Activated CD8-positive, alpha-beta T cell treated with anti-CD3 and anti-CD28 coated beads, Interleukin-2, amount 10 ng/mL, durations not matched to agents 7 days and 5 days (primary cell): ENCODE measurements at regions of chr14 and their contacts with region 1.

Region 1: DNA sequence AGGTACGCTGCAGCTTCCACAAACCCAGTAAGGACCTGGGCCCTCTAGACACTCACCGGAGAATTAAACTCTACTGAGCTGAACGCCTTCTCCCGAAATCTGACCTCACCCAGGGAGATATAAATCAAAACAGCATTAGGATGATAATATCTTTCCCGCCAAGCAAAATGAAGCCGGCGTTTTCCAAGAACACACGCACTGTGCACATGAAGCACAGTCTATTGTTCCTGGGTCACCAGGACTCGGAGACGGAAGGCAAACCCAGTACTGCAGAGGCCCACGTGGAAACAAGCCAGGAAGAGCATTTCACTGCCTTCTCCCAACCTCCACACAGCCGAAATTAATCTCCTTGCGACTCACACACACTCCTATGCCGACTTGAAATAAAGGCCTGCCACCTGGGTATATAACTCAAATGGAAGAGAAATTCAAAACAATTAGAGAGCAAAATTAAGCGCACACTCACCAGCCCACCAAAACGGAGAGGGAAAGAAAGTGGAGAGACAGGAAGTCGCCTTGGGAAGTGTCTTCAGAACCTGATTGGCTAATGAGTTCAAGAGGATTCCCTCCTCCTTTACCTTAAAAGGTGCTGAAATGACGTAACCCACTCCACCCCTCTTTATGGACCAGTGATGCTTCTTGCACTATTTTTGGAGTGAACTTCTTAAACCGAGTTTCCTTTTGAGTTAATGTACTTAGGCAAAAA is at the start of gene CCNB1IP1:
- DNase-seq: peak; percentile 72
- ATAC-seq: peak; percentile 99
- H3K4me3 Mint-ChIP-seq: peak within 1 kb of the TSS; percentile 99
- H3K27ac Mint-ChIP-seq: peak within 1 kb of the TSS; percentile 93
- H3K4me1 Mint-ChIP-seq: peaks cover 51% of the 10 kb centered on the region
- H3K27me3 Mint-ChIP-seq: peaks cover 4% of the 10 kb centered on the region
- total RNA-seq, gene CCNB1IP1: 35.3 to 38.3 TPM

Region 2: GRCh38 chr14:20195911-20196310 is 137.0 kb before region 1 on chr14:
- CTCF ChIA-PET with region 1: no interaction called
- POLR2A ChIA-PET with region 1: no interaction called
- DNase-seq: no peak
- ATAC-seq: no peak
- H3K4me3 Mint-ChIP-seq: no peak overlapping the region
- H3K27ac Mint-ChIP-seq: no peak overlapping the region
- H3K4me1 Mint-ChIP-seq: no peaks in the 10 kb centered on the region
- H3K27me3 Mint-ChIP-seq: peaks cover 3% of the 10 kb centered on the region

Region 3: GRCh38 chr14:20305265-20306078 is 27.5 kb before region 1 on chr14 and contains the start of gene TTC5:
- CTCF ChIA-PET with region 1: interaction called, 12 read pairs
- POLR2A ChIA-PET with region 1: no interaction called
- DNase-seq: peak; percentile 93
- ATAC-seq: peak; percentile 98
- H3K4me3 Mint-ChIP-seq: peak within 1 kb of the TSS; percentile 81
- H3K27ac Mint-ChIP-seq: peak within 1 kb of the TSS; percentile 67
- H3K4me1 Mint-ChIP-seq: peaks cover 24% of the 10 kb centered on the region
- H3K27me3 Mint-ChIP-seq: no peaks in the 10 kb centered on the region
- total RNA-seq, gene TTC5: 21.8 to 22.0 TPM

Region 4: DNA sequence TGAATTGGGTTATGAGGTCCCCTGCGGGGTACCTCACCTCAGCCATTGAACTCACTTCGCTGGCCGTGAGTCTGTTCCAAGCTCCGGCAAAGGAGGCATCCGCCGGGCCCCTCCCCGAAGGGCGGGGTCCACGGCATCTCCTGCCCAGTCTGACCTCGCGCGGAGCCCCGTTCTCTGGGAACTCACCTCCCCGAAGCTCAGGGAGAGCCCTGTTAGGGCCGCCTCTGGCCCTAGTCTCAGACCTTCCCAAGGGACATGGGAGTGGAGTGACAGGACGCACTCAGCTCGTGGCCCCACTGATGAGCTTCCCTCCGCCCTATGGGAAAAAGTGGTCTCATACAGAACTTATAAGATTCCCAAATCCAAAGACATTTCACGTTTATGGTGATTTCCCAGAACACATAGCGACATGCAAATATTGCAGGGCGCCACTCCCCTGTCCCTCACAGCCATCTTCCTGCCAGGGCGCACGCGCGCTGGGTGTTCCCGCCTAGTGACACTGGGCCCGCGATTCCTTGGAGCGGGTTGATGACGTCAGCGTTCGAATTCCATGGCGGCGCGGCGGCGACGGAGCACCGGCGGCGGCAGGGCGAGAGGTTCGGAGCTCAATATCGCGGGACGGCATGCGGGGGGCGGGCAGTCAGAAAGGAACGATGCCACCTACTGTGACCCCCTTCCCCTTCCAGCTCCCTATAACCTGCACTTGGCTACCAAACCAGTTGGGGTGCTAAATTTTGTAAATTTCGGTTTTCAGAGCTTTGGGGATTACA is 10.3 kb after region 1 on chr14 and contains the start of gene PARP2:
- CTCF ChIA-PET with region 1: interaction called, 120 read pairs
- POLR2A ChIA-PET with region 1: interaction called, 77 read pairs
- DNase-seq: peak; percentile 95
- ATAC-seq: peak; percentile 94
- H3K4me3 Mint-ChIP-seq: peak within 1 kb of the TSS; percentile 93
- H3K27ac Mint-ChIP-seq: peak within 1 kb of the TSS; percentile 98
- H3K4me1 Mint-ChIP-seq: peaks cover 20% of the 10 kb centered on the region
- H3K27me3 Mint-ChIP-seq: peaks cover 5% of the 10 kb centered on the region
- total RNA-seq, gene PARP2: 29.7 to 32.3 TPM

Region 5: GRCh38 chr14:20512177-20512905 is 179.4 kb after region 1 on chr14:
- CTCF ChIA-PET with region 1: no interaction called
- POLR2A ChIA-PET with region 1: no interaction called
- DNase-seq: no peak
- ATAC-seq: no peak
- H3K4me3 Mint-ChIP-seq: no peak overlapping the region
- H3K27ac Mint-ChIP-seq: no peak overlapping the region
- H3K4me1 Mint-ChIP-seq: no peaks in the 10 kb centered on the region
- H3K27me3 Mint-ChIP-seq: peaks cover 19% of the 10 kb centered on the region

Region 6: GRCh38 chr14:20818861-20819260 is 485.9 kb after region 1 on chr14:
- CTCF ChIA-PET with region 1: no interaction called
- POLR2A ChIA-PET with region 1: no interaction called
- DNase-seq: no peak
- ATAC-seq: no peak
- H3K4me3 Mint-ChIP-seq: no peak overlapping the region
- H3K27ac Mint-ChIP-seq: no peak overlapping the region
- H3K4me1 Mint-ChIP-seq: no peaks in the 10 kb centered on the region
- H3K27me3 Mint-ChIP-seq: peaks cover 6% of the 10 kb centered on the region